ENCODE measurements at regions of chr4 and their contacts with region 1.

Region 1: GRCh38 chr4:85180533-85180932 is 214.0 kb upstream of the WDFY3 start:
- DNase-seq: no peak
- H3K4me3 ChIP-seq: no peak overlapping the region
- H3K27ac ChIP-seq: no peak overlapping the region
- H3K4me1 ChIP-seq: no peaks in the 10 kb centered on the region
- H3K27me3 ChIP-seq: no peaks in the 10 kb centered on the region
- CTCF ChIP-seq: no peak
- EP300 ChIP-seq: no peak
- POLR2A ChIP-seq: no peak

Region 2: GRCh38 chr4:85246055-85246454 is 65.5 kb after region 1 on chr4:
- intact Hi-C with region 1: loop called (anchors 2 kb)
- DNase-seq: no peak
- H3K4me3 ChIP-seq: no peak overlapping the region
- H3K27ac ChIP-seq: no peak overlapping the region
- H3K4me1 ChIP-seq: no peaks in the 10 kb centered on the region
- H3K27me3 ChIP-seq: no peaks in the 10 kb centered on the region
- CTCF ChIP-seq: no peak
- EP300 ChIP-seq: no peak
- POLR2A ChIP-seq: no peak